Caco-2 (cell line): ENCODE measurements at regions of chr9 and their contacts with region 1.

Region 1: DNA sequence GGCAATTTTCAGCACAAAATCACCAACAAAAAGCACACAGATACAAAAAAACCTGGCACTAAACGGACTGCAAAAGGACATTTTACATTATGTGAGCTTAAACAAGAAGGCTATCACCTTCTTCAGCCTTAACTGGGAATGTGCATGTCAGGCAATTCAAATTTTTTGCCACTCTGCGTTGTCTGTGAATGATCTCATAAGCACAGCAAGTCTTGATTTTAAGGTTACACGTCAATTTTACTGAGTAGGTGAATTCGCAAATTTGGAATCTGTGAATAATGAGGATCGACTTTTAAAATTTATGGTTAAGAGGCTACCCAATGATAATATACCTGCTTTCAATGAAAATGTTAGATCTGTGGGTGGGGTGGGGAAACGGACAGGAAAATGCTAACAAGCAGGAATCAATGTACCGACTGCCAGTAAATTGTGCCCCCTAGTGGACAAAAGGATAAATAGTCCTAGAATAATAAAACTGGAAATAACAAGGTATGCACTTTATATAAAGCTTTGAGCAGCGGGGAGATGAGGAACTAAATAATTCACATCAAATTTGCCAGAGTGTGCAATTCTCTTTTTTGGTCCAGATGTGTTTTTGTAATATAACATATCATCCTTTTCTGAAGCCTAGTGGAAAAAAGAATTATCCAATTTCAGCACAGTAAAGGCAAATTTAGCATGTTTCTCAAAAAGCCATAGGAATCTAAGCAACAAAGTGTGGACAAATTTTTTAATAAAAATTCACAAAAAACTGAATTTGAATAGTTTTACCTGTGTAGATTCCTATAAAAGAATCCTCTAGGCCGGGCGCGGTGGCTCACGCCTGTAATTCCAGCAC is 20.5 kb downstream of the EQTN start:
- DNase-seq: peak in 1 of 2 experiments; percentile 12
- H3K4me3 ChIP-seq: no peak overlapping the region
- H3K4me3 Mint-ChIP-seq: no peak overlapping the region
- H3K27ac Mint-ChIP-seq: no peak overlapping the region
- H3K4me1 ChIP-seq: no peaks in the 10 kb centered on the region
- H3K4me1 Mint-ChIP-seq: no peaks in the 10 kb centered on the region
- H3K27me3 ChIP-seq: no peaks in the 10 kb centered on the region
- H3K27me3 Mint-ChIP-seq: no peaks in the 10 kb centered on the region
- CTCF ChIP-seq: no peak

Region 2: GRCh38 chr9:27033823-27034403 is 242.5 kb before region 1 on chr9:
- CTCF ChIA-PET with region 1: no interaction called
- POLR2A ChIA-PET with region 1: no interaction called
- intact Hi-C with region 1: loop called (anchors 1 kb)
- DNase-seq: peak; percentile 26 to 35
- H3K4me3 ChIP-seq: no peak overlapping the region
- H3K4me3 Mint-ChIP-seq: no peak overlapping the region
- H3K27ac Mint-ChIP-seq: no peak overlapping the region
- H3K4me1 ChIP-seq: no peaks in the 10 kb centered on the region
- H3K4me1 Mint-ChIP-seq: no peaks in the 10 kb centered on the region
- H3K27me3 ChIP-seq: no peaks in the 10 kb centered on the region
- H3K27me3 Mint-ChIP-seq: no peaks in the 10 kb centered on the region
- CTCF ChIP-seq: peak; percentile 26 to 40

Region 3: DNA sequence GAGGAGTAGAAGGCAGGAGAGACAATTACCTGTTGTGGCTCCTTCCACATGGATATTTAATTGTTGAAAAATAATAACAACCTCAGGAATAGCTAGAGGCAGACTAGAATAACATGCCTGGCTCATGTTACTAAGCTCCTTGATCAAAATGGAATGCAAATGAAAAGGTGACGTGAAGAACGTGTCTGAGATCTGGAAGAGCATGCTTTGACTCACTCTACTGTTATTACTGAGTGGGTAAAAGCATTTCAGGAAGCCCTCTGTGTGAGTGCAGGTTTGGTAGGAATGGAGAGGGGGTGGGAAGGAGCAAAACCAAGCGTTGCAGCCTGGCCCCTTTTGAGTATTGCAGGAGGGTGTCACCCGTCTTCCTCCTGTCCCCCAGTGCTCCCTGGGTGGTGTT is 64.2 kb before region 1 on chr9:
- CTCF ChIA-PET with region 1: no interaction called
- POLR2A ChIA-PET with region 1: no interaction called
- intact Hi-C with region 1: loop called (anchors 2 kb)
- DNase-seq: no peak
- H3K4me3 ChIP-seq: no peak overlapping the region
- H3K4me3 Mint-ChIP-seq: no peak overlapping the region
- H3K27ac Mint-ChIP-seq: no peak overlapping the region
- H3K4me1 ChIP-seq: no peaks in the 10 kb centered on the region
- H3K4me1 Mint-ChIP-seq: no peaks in the 10 kb centered on the region
- H3K27me3 ChIP-seq: no peaks in the 10 kb centered on the region
- H3K27me3 Mint-ChIP-seq: peaks cover 4% of the 10 kb centered on the region
- CTCF ChIP-seq: no peak

Region 4: GRCh38 chr9:27247756-27248155 is 28.7 kb before region 1 on chr9:
- CTCF ChIA-PET with region 1: no interaction called
- POLR2A ChIA-PET with region 1: no interaction called
- intact Hi-C with region 1: loop called (anchors 1 kb)
- DNase-seq: peak in 1 of 2 experiments; percentile 1
- H3K4me3 ChIP-seq: no peak overlapping the region
- H3K4me3 Mint-ChIP-seq: no peak overlapping the region
- H3K27ac Mint-ChIP-seq: no peak overlapping the region
- H3K4me1 ChIP-seq: no peaks in the 10 kb centered on the region
- H3K4me1 Mint-ChIP-seq: no peaks in the 10 kb centered on the region
- H3K27me3 ChIP-seq: no peaks in the 10 kb centered on the region
- H3K27me3 Mint-ChIP-seq: peaks cover 3% of the 10 kb centered on the region
- CTCF ChIP-seq: peak in 1 of 2 experiments; percentile 42